Posterior cingulate gyrus (tissue), 11 donors: ENCODE measurements at regions of chr7 and their contacts with region 1.

Region 1: GRCh38 chr7:7968543-7969305 is at the start of gene GLCCI1:
- DNase-seq: peak; percentile 96 to 100 (median 98)

Region 2: GRCh38 chr7:7585253-7585928 is 383.3 kb before region 1 on chr7:
- intact Hi-C with region 1: no loop called
- DNase-seq: no peak

Region 3: DNA sequence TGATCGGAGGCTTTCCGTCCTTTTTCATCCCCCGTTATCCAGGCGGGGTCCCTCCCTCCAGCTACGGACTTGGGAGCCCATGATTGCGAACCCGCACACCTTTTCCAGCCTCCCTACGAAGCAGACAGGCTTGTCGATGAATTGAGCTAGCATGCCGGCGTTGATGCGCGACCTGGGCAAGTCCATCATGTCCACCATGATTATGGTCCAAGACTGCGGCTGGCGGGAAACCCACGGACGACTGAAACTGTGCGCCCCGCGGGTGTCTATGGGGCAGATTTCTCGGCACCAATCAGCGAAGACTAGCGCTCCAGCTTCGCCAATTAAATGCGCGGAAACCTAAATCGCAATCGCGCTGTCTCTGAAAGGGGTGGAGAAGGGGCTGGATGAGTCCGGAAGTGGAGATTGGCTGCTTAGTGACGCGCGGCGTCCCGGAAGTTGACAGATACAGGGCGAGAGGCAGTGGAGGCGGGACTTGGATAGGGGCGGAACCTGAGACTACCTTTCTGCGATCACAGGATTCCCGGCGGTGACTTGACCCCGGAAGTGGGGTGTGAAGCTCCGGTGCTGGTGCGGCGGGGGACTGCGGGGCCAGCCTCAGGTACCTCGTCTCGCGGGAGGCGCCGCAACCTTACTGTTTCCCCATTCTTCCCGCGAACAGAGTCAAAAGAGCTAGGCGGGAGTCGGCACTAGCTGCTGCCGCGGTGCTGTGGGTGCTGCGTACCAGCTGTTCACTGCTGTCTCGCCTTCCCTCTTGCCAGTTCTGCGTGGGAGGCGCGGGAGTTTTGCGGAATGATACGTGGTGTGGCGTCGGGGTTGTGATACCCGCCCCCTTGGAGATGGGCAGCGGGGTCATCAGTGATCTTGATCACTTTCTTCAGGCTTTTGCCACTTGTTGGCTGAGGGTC is 328.2 kb before region 1 on chr7 and contains the start of gene UMAD1:
- intact Hi-C with region 1: loop called (anchors 2 kb)
- DNase-seq: peak; percentile 95 to 100 (median 99)

Region 4: GRCh38 chr7:7681179-7681935 is 287.4 kb before region 1 on chr7:
- intact Hi-C with region 1: loop called (anchors 5 kb)
- DNase-seq: peak in 2 of 10 donors; percentile 21 to 37

Region 5: DNA sequence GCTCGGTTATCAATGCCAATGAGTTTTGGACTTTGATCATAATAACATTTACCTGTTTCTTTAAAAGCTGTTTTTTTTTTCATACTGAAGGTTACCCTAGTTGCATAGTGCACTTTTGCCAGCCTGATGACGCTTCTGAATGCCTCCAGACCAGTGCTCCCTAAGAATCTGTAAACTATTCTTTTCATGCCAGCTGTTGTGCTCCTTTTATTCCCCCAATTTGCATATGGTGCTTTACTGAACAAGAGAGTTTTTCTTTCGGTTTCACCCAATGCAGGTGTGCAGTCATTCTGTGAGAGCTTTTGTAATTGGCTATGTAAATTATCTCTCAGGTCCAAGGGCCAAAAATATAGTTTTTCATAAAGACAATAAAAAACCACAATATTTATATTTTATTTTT is 48.2 kb before region 1 on chr7:
- intact Hi-C with region 1: loop called (anchors 5 kb)
- DNase-seq: no peak